ENCODE measurements at regions of chr15 and their contacts with region 1.

Region 1: DNA sequence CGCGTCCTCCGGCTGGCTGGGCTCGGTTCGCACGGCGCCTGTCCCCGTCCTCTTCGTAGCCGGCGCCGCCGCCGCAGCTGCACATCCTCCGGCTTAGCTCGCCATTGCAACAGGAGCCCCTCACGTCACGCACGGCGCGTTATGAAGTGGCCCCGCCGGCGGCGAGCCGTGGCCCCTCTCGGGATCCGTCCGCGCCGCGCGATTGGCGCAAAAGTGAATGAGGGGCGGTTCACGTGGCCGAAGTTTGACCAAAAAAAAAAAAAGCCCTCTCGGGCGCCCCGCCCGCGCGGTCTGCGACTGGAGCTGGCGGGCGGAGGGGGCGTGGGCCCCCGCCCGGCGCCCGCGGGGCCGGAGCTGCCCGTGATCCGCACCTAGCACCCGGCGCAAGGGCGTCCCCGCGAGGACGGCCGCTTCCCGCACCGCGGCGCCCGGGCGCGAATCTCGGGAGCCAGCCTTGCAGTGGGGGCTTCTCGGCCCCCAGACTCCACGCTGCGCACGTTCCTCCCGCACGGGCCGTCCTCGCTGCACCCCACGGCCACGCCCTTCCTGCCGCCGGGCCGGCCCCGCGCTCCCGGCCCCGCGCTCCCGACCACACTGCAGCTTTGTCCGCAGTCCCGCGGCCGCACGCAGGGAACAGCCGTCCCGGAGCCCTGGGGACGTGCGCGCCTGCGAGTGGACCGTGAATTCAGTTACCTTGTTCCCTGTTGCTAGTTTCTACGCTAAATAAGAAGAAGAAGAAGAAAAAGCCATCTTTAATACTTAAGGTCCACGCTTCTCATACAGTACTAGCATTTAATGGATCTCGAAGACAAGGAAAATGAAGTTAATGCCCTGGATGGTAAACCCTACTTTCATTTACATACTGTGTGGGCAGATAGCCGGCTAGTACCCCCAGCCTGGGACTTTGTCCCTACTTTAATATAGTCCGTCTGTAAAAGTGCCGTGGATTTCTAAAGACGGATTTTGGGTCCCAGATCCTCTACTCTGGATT is at the start of gene CHSY1:
- DNase-seq: peak; percentile 97
- H3K4me3 ChIP-seq: peak within 1 kb of the TSS; percentile 68 to 86 (median 79)
- H3K27ac ChIP-seq: peak within 1 kb of the TSS; percentile 87 to 95 (median 92)
- H3K4me1 ChIP-seq: peaks cover 0 to 43% (median 26%) of the 10 kb centered on the region in 4 donors
- H3K27me3 ChIP-seq: no peaks in the 10 kb centered on the region
- CTCF ChIP-seq: peak in 1 of 4 experiments; percentile 21
- EP300 ChIP-seq: peak in 1 of 4 donors; percentile 47
- POLR2A ChIP-seq: peak; percentile 55 to 61
- total RNA-seq, gene CHSY1: 11.2 to 13.6 (median 12.6) TPM

Region 2: GRCh38 chr15:100918034-100918689 is 334.0 kb before region 1 on chr15:
- intact Hi-C with region 1: loop called (anchors 5 kb)
- DNase-seq: peak; percentile 90
- H3K4me3 ChIP-seq: peak overlapping the region; percentile 61 to 87 (median 74)
- H3K27ac ChIP-seq: peak overlapping the region; percentile 65 to 77 (median 76)
- H3K4me1 ChIP-seq: peaks cover 0 to 35% (median 20%) of the 10 kb centered on the region in 4 donors
- H3K27me3 ChIP-seq: no peaks in the 10 kb centered on the region
- CTCF ChIP-seq: peak; percentile 73 to 92 (median 88)
- EP300 ChIP-seq: no peak
- POLR2A ChIP-seq: no peak

Region 3: DNA sequence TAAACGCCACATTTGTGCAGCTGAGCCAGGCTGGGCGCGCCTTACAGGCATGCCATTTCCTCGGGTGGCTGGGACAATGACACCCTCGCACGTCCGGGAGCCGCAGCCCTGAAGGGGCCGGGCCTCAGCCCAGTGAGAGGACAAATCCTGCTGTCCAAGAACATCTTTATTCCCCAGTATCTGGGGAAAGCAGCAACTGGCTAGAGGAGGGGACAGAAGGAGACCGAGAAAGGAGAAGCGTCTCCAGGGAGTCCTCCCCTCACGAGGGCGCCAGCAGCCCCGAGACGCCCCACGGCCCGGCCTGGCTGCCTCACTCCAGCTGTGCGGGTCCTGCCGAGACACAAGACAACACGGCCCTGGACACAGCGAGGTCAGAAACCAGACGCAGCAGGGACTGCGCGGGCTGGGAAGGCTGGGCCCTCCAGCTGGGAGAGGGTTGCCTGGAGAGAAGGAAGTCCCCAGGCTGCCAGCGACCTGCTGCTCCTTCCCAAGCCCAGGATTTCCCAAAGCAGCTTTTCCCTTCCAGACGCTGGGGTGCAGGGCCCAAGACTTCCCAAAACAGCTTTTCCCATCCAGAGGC is 130.5 kb before region 1 on chr15:
- intact Hi-C with region 1: loop called (anchors 5 kb)
- DNase-seq: peak; percentile 86
- H3K4me3 ChIP-seq: peak overlapping the region in 3 of 4 donors; percentile 18 to 33 (median 30)
- H3K27ac ChIP-seq: peak overlapping the region; percentile 41 to 73 (median 57)
- H3K4me1 ChIP-seq: peaks cover 0 to 21% (median 14%) of the 10 kb centered on the region in 4 donors
- H3K27me3 ChIP-seq: no peaks in the 10 kb centered on the region
- CTCF ChIP-seq: no peak
- EP300 ChIP-seq: peak in 1 of 4 donors; percentile 1
- POLR2A ChIP-seq: no peak